ENCODE measurements at regions of chr11 and their contacts with region 1.

Region 1: GRCh38 chr11:69704508-69705253 is 859 bp upstream of the FGF19 start:
- DNase-seq: no peak
- ATAC-seq: no peak
- H3K4me3 ChIP-seq: no peak overlapping the region
- H3K4me3 Mint-ChIP-seq: peak overlapping the region in 5 of 10 donors; percentile 38 to 76 (median 60)
- H3K27ac ChIP-seq: no peak overlapping the region
- H3K27ac Mint-ChIP-seq: no peak overlapping the region
- H3K4me1 ChIP-seq: no peaks in the 10 kb centered on the region
- H3K4me1 Mint-ChIP-seq: peaks cover 0 to 19% (median 13%) of the 10 kb centered on the region in 7 donors
- H3K27me3 ChIP-seq: peaks cover 0 to 10% of the 10 kb centered on the region in 2 donors
- H3K27me3 Mint-ChIP-seq: peaks cover 33 to 63% (median 47%) of the 10 kb centered on the region in 5 donors

Region 2: GRCh38 chr11:69417146-69418085 is 287.3 kb before region 1 on chr11:
- CTCF ChIA-PET with region 1: no interaction called
- POLR2A ChIA-PET with region 1: no interaction called
- intact Hi-C with region 1: no loop called
- DNase-seq: no peak
- ATAC-seq: no peak
- H3K4me3 ChIP-seq: no peak overlapping the region
- H3K4me3 Mint-ChIP-seq: no peak overlapping the region
- H3K27ac ChIP-seq: no peak overlapping the region
- H3K27ac Mint-ChIP-seq: no peak overlapping the region
- H3K4me1 ChIP-seq: no peaks in the 10 kb centered on the region
- H3K4me1 Mint-ChIP-seq: no peaks in the 10 kb centered on the region
- H3K27me3 ChIP-seq: no peaks in the 10 kb centered on the region
- H3K27me3 Mint-ChIP-seq: no peaks in the 10 kb centered on the region

Region 3: GRCh38 chr11:69634590-69634989 is 70.1 kb before region 1 on chr11:
- CTCF ChIA-PET with region 1: no interaction called
- POLR2A ChIA-PET with region 1: no interaction called
- intact Hi-C with region 1: no loop called
- DNase-seq: no peak
- ATAC-seq: no peak
- H3K4me3 ChIP-seq: no peak overlapping the region
- H3K4me3 Mint-ChIP-seq: no peak overlapping the region
- H3K27ac ChIP-seq: no peak overlapping the region
- H3K27ac Mint-ChIP-seq: no peak overlapping the region
- H3K4me1 ChIP-seq: peaks cover 0 to 24% of the 10 kb centered on the region in 2 donors
- H3K4me1 Mint-ChIP-seq: peaks cover 4 to 19% (median 8%) of the 10 kb centered on the region in 7 donors
- H3K27me3 ChIP-seq: peaks cover 5 to 18% of the 10 kb centered on the region in 2 donors
- H3K27me3 Mint-ChIP-seq: peaks cover 13 to 62% (median 17%) of the 10 kb centered on the region in 5 donors

Region 4: GRCh38 chr11:69825037-69825834 is 120.6 kb after region 1 on chr11:
- CTCF ChIA-PET with region 1: no interaction called
- POLR2A ChIA-PET with region 1: no interaction called
- intact Hi-C with region 1: loop called in 1 of 2 experiments (anchors 10 kb)
- DNase-seq: no peak
- ATAC-seq: no peak
- H3K4me3 ChIP-seq: no peak overlapping the region
- H3K4me3 Mint-ChIP-seq: no peak overlapping the region
- H3K27ac ChIP-seq: no peak overlapping the region
- H3K27ac Mint-ChIP-seq: no peak overlapping the region
- H3K4me1 ChIP-seq: no peaks in the 10 kb centered on the region
- H3K4me1 Mint-ChIP-seq: no peaks in the 10 kb centered on the region
- H3K27me3 ChIP-seq: no peaks in the 10 kb centered on the region
- H3K27me3 Mint-ChIP-seq: peaks cover 5 to 38% (median 17%) of the 10 kb centered on the region in 5 donors

Measured in naive thymus-derived CD4-positive, alpha-beta T cell (primary cell).